GM12878 (cell line): ENCODE measurements at regions of chr2 and their contacts with region 1.

Region 1: DNA sequence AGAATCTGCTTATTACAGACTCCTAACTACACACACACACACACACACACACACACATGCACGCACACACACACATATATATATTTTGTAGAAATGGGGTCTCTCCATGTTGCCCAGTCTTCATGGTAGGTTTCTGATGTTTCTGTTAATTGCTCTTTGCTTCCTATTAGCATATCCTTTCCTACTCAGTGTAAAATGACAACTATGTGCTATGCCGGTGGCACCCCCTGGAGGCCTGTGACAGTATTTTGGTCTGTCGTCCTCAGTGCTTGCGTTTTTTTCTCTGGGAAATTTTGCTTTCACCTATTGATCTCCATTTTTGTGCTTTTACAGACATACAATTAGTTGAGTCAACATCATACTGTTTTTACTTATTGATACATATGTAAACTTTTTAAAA is 322.1 kb downstream of the LRRTM1 start:
- DNase-seq: no peak
- ATAC-seq: peak; percentile 83
- H3K4me3 ChIP-seq: no peak overlapping the region
- H3K27ac ChIP-seq: no peak overlapping the region
- H3K4me1 ChIP-seq: no peaks in the 10 kb centered on the region
- H3K27me3 ChIP-seq: no peaks in the 10 kb centered on the region
- CTCF ChIP-seq: peak; percentile 29 to 51 (median 38)
- EP300 ChIP-seq: no peak
- POLR2A ChIP-seq: no peak
- RAD21 ChIP-seq: peak; percentile 44

Region 2: GRCh38 chr2:79935771-79936657 is 46.4 kb before region 1 on chr2:
- CTCF ChIA-PET with region 1: interaction called, 4 read pairs
- POLR2A ChIA-PET with region 1: no interaction called
- RAD21 ChIA-PET with region 1: interaction called, 3 read pairs
- SMC1A ChIA-PET with region 1: no interaction called
- in situ Hi-C with region 1: no loop called
- intact Hi-C with region 1: loop called (anchors 1 kb)
- DNase-seq: no peak
- ATAC-seq: peak; percentile 94
- H3K4me3 ChIP-seq: no peak overlapping the region
- H3K27ac ChIP-seq: no peak overlapping the region
- H3K4me1 ChIP-seq: no peaks in the 10 kb centered on the region
- H3K27me3 ChIP-seq: no peaks in the 10 kb centered on the region; a peak in 1 of 4 replicates
- CTCF ChIP-seq: peak; percentile 65 to 74 (median 70)
- EP300 ChIP-seq: no peak
- POLR2A ChIP-seq: no peak
- RAD21 ChIP-seq: peak; percentile 68